ENCODE measurements at regions of chr1 and their contacts with region 1.

Region 1: GRCh38 chr1:178093205-178093957 is 523 bp upstream of the RASAL2 start:
- DNase-seq: peak; percentile 95
- H3K4me3 ChIP-seq: peak overlapping the region; percentile 85 to 99 (median 87)
- H3K27ac ChIP-seq: peak overlapping the region; percentile 79
- H3K4me1 ChIP-seq: peaks cover 31% of the 10 kb centered on the region
- H3K27me3 ChIP-seq: no peaks in the 10 kb centered on the region
- CTCF ChIP-seq: peak in 1 of 2 donors; percentile 18

Region 2: GRCh38 chr1:178031856-178032320 is 61.5 kb before region 1 on chr1:
- CTCF ChIA-PET with region 1: interaction called, 4 read pairs
- dilution Hi-C with region 1: no loop called
- in situ Hi-C with region 1: no loop called
- intact Hi-C with region 1: loop called (anchors 1 kb)
- DNase-seq: peak; percentile 71
- H3K4me3 ChIP-seq: no peak overlapping the region
- H3K27ac ChIP-seq: no peak overlapping the region
- H3K4me1 ChIP-seq: peaks cover under 1% of the 10 kb centered on the region
- H3K27me3 ChIP-seq: no peaks in the 10 kb centered on the region
- CTCF ChIP-seq: peak; percentile 89 to 91

Region 3: GRCh38 chr1:178172954-178173353 is 79.6 kb after region 1 on chr1:
- CTCF ChIA-PET with region 1: no interaction called
- dilution Hi-C with region 1: loop called (anchors 5 kb)
- in situ Hi-C with region 1: no loop called
- intact Hi-C with region 1: no loop called
- DNase-seq: no peak
- H3K4me3 ChIP-seq: no peak overlapping the region
- H3K27ac ChIP-seq: peak overlapping the region; percentile 99
- H3K4me1 ChIP-seq: peaks cover 33% of the 10 kb centered on the region
- H3K27me3 ChIP-seq: no peaks in the 10 kb centered on the region
- CTCF ChIP-seq: no peak

Region 4: DNA sequence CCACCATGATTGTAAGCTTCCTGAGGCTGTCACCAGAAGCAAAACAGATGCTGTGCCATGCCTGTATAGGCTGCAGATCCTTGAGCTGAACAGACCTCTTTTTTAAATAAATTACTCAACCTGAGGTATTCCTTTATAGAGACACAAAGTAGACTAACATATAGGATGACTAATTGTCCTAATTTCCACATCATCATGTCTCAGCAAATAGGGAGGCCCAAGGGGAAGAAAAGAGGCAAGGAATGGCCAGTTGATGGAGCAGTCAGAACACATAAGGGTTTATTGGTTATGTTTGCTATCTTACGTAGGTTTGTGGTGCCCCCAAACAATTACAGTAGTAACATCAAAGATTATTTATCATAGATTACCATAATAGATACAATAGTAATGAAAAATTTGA is 126.7 kb after region 1 on chr1:
- CTCF ChIA-PET with region 1: interaction called, 11 read pairs
- dilution Hi-C with region 1: no loop called
- in situ Hi-C with region 1: no loop called
- intact Hi-C with region 1: no loop called
- DNase-seq: peak; percentile 75
- H3K4me3 ChIP-seq: no peak overlapping the region
- H3K27ac ChIP-seq: no peak overlapping the region
- H3K4me1 ChIP-seq: peaks cover 14% of the 10 kb centered on the region
- H3K27me3 ChIP-seq: no peaks in the 10 kb centered on the region
- CTCF ChIP-seq: peak in 1 of 2 donors; percentile 17

Region 5: DNA sequence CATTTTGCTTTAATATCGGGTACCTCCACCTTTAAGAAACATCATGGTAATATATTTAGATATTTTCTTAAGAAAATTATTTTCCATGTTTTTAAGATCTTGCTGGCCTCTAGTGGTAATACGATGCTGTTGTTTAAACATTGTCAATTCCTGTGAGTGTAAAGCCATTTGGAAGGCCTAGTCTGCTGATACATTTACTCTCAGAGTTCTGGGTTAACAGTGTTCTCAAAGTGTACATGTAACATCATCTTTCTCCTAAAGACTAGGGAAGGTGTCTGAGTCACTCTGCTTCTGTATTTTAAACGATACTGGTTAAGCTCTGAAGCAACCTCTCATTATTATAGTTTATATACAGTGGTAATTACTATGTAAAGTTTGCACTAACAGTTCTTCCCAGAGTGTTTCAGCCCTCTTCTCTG is 189.6 kb after region 1 on chr1:
- CTCF ChIA-PET with region 1: no interaction called
- dilution Hi-C with region 1: no loop called
- in situ Hi-C with region 1: no loop called
- intact Hi-C with region 1: loop called (anchors 1 kb)
- DNase-seq: peak; percentile 72
- H3K4me3 ChIP-seq: no peak overlapping the region
- H3K27ac ChIP-seq: peak overlapping the region; percentile 55
- H3K4me1 ChIP-seq: peaks cover 29% of the 10 kb centered on the region
- H3K27me3 ChIP-seq: no peaks in the 10 kb centered on the region
- CTCF ChIP-seq: peak; percentile 48 to 56

Measured in mammary epithelial cell (primary cell).